ENCODE measurements at regions of chr5 and their contacts with region 1.

Region 1: DNA sequence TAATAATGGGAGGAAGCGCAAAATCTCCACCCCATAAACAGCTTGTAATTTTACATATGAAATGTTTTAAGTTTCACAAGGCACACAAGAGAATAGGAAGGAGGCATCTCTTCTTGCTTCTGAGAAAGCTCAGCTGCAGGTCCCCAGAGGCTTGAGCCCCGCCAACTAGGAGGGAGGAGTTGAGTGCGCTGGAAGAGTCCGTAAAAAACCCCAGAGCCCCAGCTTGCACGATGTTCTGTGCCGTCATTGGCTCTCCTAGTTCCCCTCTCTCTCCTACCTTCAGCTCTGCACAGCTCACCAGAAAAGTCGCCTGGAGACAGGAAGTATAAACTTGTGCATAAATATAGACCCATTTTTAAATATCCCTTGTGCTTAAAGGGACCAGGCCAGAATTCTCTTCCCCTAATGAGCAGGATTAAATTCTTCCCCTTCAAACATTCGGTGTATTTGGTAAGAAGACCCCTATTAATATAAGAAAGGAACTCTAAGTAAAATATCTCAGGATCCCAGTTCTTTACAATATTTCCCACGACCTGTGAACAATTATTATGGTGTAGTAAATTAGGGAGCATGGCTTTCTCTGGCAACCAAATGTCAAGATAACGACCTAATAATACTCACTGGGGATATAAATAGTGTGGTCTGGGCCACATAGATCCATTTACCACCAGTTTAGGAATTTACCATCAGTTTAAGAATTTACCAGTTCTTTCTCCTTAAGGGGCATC is 13.7 kb downstream of the GLRX start:
- DNase-seq: peak; percentile 72
- ATAC-seq: peak; percentile 99
- H3K4me3 Mint-ChIP-seq: peak overlapping the region; percentile 77
- H3K27ac Mint-ChIP-seq: peak overlapping the region; percentile 95
- H3K4me1 Mint-ChIP-seq: peaks cover 56% of the 10 kb centered on the region
- H3K27me3 Mint-ChIP-seq: no peaks in the 10 kb centered on the region
- CTCF ChIP-seq: no peak

Region 2: DNA sequence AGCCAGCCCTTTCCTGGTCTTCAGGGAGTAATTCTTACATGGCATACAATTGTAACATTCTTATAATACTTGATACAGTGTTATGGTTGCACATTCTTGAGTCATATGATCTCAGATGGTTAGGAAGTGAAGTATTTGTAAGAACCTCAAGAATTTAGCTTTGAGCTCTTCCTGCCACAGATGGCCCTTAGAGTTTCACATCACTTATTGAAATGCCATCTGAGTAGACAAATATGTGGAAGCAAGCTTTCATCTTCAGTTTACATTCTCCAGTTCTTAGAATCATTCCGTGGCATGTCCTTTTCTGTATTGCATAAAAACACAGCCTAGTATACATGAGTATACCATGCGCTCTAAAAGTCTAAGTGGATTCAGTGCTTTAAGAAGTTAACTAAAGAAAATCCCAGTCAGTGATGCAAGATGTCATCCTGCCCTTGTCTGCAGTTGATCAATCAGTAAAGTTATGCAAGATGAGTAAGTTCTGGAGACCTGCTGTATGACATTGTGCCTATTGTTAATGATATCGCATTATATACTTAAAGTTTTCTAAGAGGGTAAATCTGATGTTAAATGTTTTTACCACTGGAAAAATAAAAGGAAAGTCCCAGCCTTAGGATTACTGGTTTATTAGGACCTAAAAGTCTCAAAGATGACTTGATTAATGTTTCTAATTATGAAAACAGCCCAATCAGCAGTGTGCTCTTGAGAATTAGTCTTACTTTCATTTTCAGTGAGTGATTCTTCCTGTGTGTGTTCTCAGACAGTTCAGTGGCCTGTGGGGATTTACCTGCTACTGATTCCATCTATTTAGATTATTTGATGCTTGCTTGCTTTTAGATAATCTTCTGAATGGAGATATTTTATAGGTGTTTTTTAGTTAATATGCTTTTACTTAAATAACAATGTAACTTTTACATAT is 48.3 kb before region 1 on chr5:
- CTCF ChIA-PET with region 1: no interaction called
- POLR2A ChIA-PET with region 1: no interaction called
- intact Hi-C with region 1: loop called (anchors 2 kb)
- DNase-seq: no peak
- ATAC-seq: peak; percentile 82
- H3K4me3 Mint-ChIP-seq: peak overlapping the region; percentile 74
- H3K27ac Mint-ChIP-seq: peak overlapping the region; percentile 89
- H3K4me1 Mint-ChIP-seq: peaks cover 42% of the 10 kb centered on the region
- H3K27me3 Mint-ChIP-seq: no peaks in the 10 kb centered on the region
- CTCF ChIP-seq: no peak

Region 3: DNA sequence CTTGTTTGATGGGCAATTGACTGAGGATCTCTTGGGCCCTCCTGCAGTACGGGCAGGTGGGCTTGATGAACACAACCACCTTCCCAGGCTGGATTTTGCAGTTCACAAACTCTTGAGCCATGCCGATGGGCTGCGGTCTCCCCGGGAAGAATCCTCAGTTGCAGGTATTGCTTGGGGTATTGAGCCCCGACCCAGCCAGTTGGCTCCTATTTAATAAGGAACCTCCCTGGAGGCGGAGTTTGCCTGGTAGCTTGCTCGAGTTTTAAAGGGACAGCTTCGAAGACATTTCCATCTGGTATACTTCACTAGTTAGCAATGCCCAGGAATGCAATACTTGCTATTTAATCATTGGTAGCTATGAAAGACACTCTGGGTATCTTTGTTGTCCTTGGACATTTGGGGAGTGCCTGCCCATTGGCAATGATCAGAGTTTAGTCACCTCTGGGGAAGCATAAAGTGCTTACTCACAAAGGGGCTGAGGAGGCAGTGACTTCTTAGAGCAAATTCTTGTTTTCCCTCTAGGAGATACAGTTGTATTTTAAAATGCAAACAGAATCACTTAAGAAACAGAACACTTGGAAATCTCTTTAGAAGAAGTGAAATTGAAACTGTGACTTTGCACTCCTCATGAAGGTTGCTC is 13.8 kb after region 1 on chr5 and contains the start of gene GLRX:
- CTCF ChIA-PET with region 1: interaction called, 7 read pairs
- POLR2A ChIA-PET with region 1: interaction called, 203 read pairs
- intact Hi-C with region 1: loop called (anchors 1 kb)
- DNase-seq: no peak
- ATAC-seq: peak; percentile 30
- H3K4me3 Mint-ChIP-seq: peak within 1 kb of the TSS; percentile 95
- H3K27ac Mint-ChIP-seq: peak within 1 kb of the TSS; percentile 98
- H3K4me1 Mint-ChIP-seq: peaks cover 72% of the 10 kb centered on the region
- H3K27me3 Mint-ChIP-seq: no peaks in the 10 kb centered on the region
- CTCF ChIP-seq: no peak
- total RNA-seq, gene GLRX: 55.4 and 60.2 TPM in 2 replicates

Region 4: DNA sequence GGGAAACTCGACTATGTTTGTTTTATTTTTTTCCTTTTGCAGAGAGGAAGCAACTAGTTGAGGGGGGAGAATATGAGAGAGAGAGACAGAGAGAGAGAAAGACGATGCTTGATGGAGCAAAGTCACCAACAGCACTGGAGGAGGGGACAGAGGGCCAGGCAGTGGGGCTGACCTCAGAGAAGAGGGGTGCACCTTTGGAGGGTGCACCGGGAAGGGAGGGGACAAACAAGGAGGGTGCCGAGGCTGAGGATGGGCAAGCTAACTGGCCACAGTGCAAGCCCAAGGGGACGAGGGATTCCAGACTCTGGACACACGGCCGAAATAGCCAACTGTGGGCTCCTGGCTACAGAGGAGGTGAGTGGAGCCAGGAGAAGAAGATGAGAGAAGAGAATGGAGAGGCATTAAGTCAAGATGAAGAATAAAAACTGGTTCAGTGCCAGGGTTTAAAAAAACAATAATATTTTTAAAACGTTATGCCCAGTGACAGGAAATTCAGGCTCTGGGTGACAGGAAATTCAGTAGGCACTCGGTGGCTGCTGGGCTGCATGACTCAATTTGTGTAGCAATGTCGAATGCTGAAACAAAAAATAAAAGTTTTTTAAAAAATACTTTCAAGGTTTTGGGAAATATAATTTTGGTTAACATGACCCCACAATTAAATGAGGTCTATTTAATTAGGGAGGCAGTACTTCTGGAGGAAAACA is 27.0 kb after region 1 on chr5:
- CTCF ChIA-PET with region 1: interaction called, 6 read pairs
- POLR2A ChIA-PET with region 1: interaction called, 26 read pairs
- intact Hi-C with region 1: loop called (anchors 1 kb)
- DNase-seq: no peak
- ATAC-seq: no peak
- H3K4me3 Mint-ChIP-seq: peak overlapping the region; percentile 92
- H3K27ac Mint-ChIP-seq: peak overlapping the region; percentile 84
- H3K4me1 Mint-ChIP-seq: peaks cover 55% of the 10 kb centered on the region
- H3K27me3 Mint-ChIP-seq: no peaks in the 10 kb centered on the region
- CTCF ChIP-seq: no peak

Region 5: DNA sequence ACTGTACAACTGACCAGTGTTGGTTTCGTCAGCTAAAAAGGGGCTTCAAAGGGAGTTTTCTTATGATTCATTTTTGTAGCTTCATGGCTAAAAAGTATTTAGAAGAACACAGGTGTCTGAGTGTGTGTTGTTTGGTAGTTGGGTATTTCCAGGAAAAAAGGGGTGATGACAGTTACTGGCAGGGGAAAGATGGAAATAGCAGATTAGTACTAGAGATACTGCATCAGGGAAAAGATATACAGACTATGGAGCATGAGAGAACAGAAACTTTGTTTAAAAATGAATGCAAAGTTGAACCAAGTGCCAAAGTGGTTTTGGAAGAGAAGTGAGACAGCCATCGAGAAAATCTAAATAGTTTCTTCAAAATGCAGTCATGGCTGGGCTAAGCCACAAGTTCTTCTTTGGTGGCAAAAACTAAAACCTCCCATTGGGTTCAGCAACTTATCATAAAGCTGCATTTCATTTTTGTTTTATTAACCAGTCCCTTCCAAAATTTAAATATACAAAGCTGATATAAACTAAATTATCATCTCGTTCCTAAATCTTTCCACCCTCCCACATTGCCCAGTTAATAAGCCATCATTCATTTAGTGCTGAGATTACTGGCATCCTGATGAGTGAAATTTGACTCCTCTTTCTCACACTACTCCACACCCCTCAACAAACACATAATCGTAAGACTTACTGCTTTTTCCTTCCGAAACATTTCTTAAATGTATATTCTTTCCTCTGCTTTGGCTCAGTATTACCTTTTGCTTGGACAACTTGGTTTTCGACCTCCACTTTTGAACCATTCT is 119.3 kb after region 1 on chr5:
- CTCF ChIA-PET with region 1: no interaction called
- POLR2A ChIA-PET with region 1: no interaction called
- intact Hi-C with region 1: loop called (anchors 2 kb)
- DNase-seq: no peak
- ATAC-seq: peak; percentile 70
- H3K4me3 Mint-ChIP-seq: peak overlapping the region; percentile 37
- H3K27ac Mint-ChIP-seq: peak overlapping the region; percentile 84
- H3K4me1 Mint-ChIP-seq: peaks cover 67% of the 10 kb centered on the region
- H3K27me3 Mint-ChIP-seq: no peaks in the 10 kb centered on the region
- CTCF ChIP-seq: no peak

Region 6: DNA sequence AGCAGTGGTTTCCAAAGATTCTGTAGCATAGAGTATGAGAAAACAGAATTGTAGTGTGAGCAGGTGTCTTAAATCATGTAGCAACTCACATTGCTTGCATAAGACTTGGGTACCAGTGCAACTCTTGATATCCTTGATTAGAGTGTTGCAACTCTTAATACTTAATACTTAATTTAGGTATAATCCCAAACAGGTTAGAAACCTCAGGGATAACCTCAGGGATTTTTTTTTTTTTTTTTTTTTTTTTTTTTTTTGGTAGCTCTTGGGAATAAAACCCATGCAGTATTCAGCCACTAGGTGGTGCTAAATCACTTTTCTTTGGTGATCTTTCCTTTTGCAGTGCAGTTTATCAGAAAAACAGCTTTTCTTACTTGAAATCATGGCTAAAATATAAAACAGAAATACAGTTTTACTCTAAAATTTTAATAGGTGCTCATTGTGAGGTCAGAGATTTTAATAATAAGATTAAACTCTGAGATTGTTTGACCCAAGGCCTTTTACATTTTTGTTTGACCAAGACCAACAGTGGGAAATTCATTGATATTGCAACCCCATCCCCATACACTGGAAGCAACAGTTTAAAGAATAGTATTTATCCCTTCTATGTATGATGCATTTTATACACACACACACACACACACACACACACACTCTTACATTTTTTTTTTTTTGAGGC is 943.6 kb after region 1 on chr5:
- CTCF ChIA-PET with region 1: no interaction called
- POLR2A ChIA-PET with region 1: no interaction called
- intact Hi-C with region 1: no loop called
- DNase-seq: no peak
- ATAC-seq: no peak
- H3K4me3 Mint-ChIP-seq: no peak overlapping the region
- H3K27ac Mint-ChIP-seq: no peak overlapping the region
- H3K4me1 Mint-ChIP-seq: no peaks in the 10 kb centered on the region
- H3K27me3 Mint-ChIP-seq: no peaks in the 10 kb centered on the region
- CTCF ChIP-seq: peak; percentile 76